ENCODE measurements at regions of chr5 and their contacts with region 1.

Region 1: GRCh38 chr5:78648359-78649210 is at the start of gene LHFPL2:
- DNase-seq: peak; percentile 39 to 86
- H3K4me3 ChIP-seq: peak within 1 kb of the TSS; percentile 76 to 94
- H3K27ac ChIP-seq: peak within 1 kb of the TSS; percentile 98 to 99
- H3K4me1 ChIP-seq: peaks cover 4 to 35% of the 10 kb centered on the region in 2 donors
- H3K27me3 ChIP-seq: no peaks in the 10 kb centered on the region
- CTCF ChIP-seq: no peak
- total RNA-seq, gene LHFPL2: 9.7 TPM

Region 2: GRCh38 chr5:78467752-78468357 is 180.7 kb before region 1 on chr5:
- intact Hi-C with region 1: loop called (anchors 5 kb)
- DNase-seq: no peak
- H3K4me3 ChIP-seq: no peak overlapping the region
- H3K27ac ChIP-seq: no peak overlapping the region
- H3K4me1 ChIP-seq: no peaks in the 10 kb centered on the region
- H3K27me3 ChIP-seq: no peaks in the 10 kb centered on the region
- CTCF ChIP-seq: peak; percentile 73 to 85 (median 84)

Region 3: GRCh38 chr5:78594610-78595457 is 53.8 kb before region 1 on chr5:
- intact Hi-C with region 1: loop called (anchors 2 kb)
- DNase-seq: peak in 1 of 2 donors; percentile 84
- H3K4me3 ChIP-seq: no peak overlapping the region
- H3K27ac ChIP-seq: peak overlapping the region; percentile 66 to 74
- H3K4me1 ChIP-seq: peaks cover 14 to 47% of the 10 kb centered on the region in 2 donors
- H3K27me3 ChIP-seq: no peaks in the 10 kb centered on the region
- CTCF ChIP-seq: no peak

Region 4: GRCh38 chr5:78747705-78748359 is 99.2 kb after region 1 on chr5:
- intact Hi-C with region 1: loop called (anchors 2 kb)
- DNase-seq: peak in 1 of 2 donors; percentile 68
- H3K4me3 ChIP-seq: no peak overlapping the region
- H3K27ac ChIP-seq: peak overlapping the region; percentile 79 to 92
- H3K4me1 ChIP-seq: peaks cover 10 to 24% of the 10 kb centered on the region in 2 donors
- H3K27me3 ChIP-seq: no peaks in the 10 kb centered on the region
- CTCF ChIP-seq: no peak

Region 5: GRCh38 chr5:78811121-78811817 is 162.7 kb after region 1 on chr5:
- intact Hi-C with region 1: no loop called
- DNase-seq: no peak
- H3K4me3 ChIP-seq: no peak overlapping the region
- H3K27ac ChIP-seq: no peak overlapping the region
- H3K4me1 ChIP-seq: no peaks in the 10 kb centered on the region
- H3K27me3 ChIP-seq: no peaks in the 10 kb centered on the region
- CTCF ChIP-seq: no peak